ENCODE measurements at regions of chr7 and their contacts with region 1.

Region 1: GRCh38 chr7:93779115-93779514 is 111.4 kb downstream of the TFPI2 start:
- DNase-seq: no peak
- ATAC-seq: no peak
- H3K4me3 Mint-ChIP-seq: no peak overlapping the region
- H3K27ac Mint-ChIP-seq: no peak overlapping the region
- H3K4me1 Mint-ChIP-seq: no peaks in the 10 kb centered on the region
- H3K27me3 Mint-ChIP-seq: no peaks in the 10 kb centered on the region
- CTCF ChIP-seq: no peak

Region 2: GRCh38 chr7:93799750-93800357 is 20.7 kb after region 1 on chr7:
- CTCF ChIA-PET with region 1: no interaction called
- POLR2A ChIA-PET with region 1: no interaction called
- intact Hi-C with region 1: loop called (anchors 2 kb)
- DNase-seq: no peak
- ATAC-seq: no peak
- H3K4me3 Mint-ChIP-seq: no peak overlapping the region
- H3K27ac Mint-ChIP-seq: no peak overlapping the region
- H3K4me1 Mint-ChIP-seq: no peaks in the 10 kb centered on the region
- H3K27me3 Mint-ChIP-seq: peaks cover 2% of the 10 kb centered on the region
- CTCF ChIP-seq: no peak

Measured in activated B cell treated with CpG ODN at 0.5 μM for 24 hours (primary cell).